Mammary epithelial cell (primary cell): ENCODE measurements at regions of chr1 and their contacts with region 1.

Region 1: GRCh38 chr1:35192853-35193664 is at the start of gene SFPQ:
- DNase-seq: peak; percentile 98
- H3K4me3 ChIP-seq: peak within 1 kb of the TSS; percentile 93 to 100 (median 93)
- H3K27ac ChIP-seq: peak within 1 kb of the TSS; percentile 87
- H3K4me1 ChIP-seq: peaks cover 23% of the 10 kb centered on the region
- H3K27me3 ChIP-seq: no peaks in the 10 kb centered on the region
- CTCF ChIP-seq: no peak
- total RNA-seq, gene SFPQ: 156 to 255 TPM

Region 2: DNA sequence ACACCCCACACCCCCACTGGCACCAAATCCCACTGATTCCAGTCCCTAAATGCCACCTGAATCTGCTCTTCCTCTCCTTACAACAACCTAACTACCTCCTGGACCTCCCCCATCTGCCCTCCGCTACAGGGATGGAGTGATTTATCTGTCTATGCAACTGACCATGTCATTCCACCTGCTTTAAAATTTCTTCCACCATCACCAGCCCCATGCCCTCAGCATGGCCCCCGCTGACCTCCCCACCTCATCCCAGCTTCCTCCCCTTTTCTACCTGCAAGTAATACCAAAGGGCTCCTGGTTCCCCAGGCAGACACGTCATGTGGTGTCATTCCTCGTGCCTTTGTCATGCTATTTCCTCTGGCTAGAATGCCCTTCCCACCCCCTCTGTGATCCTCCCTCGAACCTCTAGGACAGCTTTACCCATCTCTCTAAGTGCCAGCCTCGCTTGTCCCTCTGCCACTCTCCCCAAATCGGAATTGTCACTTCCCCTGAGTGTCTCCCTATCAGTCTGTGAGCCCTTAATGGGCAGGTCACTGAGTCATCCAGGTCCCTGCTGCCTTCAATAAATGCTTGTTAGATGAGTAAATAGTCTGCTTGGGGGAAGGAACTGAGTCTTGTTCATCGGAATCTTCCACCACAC is 429.8 kb before region 1 on chr1:
- CTCF ChIA-PET with region 1: no interaction called
- dilution Hi-C with region 1: no loop called
- in situ Hi-C with region 1: no loop called
- intact Hi-C with region 1: loop called (anchors 10 kb)
- DNase-seq: peak; percentile 91
- H3K4me3 ChIP-seq: peak overlapping the region in 1 of 3 experiments; percentile 2
- H3K27ac ChIP-seq: peak overlapping the region; percentile 81
- H3K4me1 ChIP-seq: peaks cover 53% of the 10 kb centered on the region
- H3K27me3 ChIP-seq: no peaks in the 10 kb centered on the region
- CTCF ChIP-seq: no peak

Region 3: DNA sequence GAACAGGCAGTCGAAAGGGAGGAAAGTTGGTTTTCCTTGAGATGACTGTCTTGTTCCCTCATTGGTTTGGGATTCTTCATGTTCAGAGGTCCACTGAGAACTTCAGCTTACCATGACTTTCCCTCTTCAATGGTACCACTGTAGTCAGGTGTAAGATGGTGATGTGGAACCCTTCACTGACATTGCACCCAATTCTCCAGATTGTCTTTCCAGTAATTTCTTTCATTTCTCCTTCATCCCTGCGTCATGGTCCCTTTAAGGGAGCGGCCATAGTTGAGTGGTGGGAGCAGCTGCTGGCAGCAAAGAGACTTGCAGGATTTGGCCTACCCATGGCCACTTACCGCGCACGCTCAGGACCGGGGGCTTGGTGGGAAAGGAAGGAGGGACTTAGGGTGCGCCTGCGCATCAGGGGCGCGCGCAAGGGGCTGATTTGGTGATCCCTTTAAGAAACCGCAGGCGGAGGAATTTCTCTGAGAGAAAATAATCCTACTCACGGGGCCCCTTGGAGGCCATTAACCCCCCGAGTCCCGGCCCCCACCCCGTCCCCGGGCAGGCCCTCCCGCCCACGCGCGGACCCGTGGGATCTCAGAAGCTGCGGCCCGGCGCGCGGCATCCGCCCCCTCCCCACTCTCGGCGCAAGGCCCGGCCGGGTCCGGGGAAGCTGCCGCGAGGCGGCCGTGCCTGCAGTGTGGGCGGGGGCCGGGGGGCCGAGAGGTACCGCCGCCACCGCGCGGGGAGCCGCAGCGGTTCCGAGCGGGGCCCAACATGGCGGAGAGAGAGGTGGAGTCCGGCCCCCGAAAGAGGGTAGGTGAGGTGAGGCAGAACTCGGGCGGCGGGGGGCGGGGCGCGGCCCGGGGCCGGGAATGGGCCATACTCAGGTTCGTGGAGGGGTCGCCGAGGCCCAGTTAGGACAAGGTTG is 75.5 kb after region 1 on chr1 and contains the start of gene ZMYM4:
- CTCF ChIA-PET with region 1: no interaction called
- dilution Hi-C with region 1: loop called (anchors 10 kb)
- in situ Hi-C with region 1: no loop called
- intact Hi-C with region 1: loop called (anchors 2 kb)
- DNase-seq: peak; percentile 92
- H3K4me3 ChIP-seq: peak within 1 kb of the TSS; percentile 80 to 94 (median 83)
- H3K27ac ChIP-seq: peak within 1 kb of the TSS; percentile 56
- H3K4me1 ChIP-seq: peaks cover 14% of the 10 kb centered on the region
- H3K27me3 ChIP-seq: no peaks in the 10 kb centered on the region
- CTCF ChIP-seq: no peak
- total RNA-seq, gene ZMYM4: 34.3 to 47.9 TPM

Region 4: GRCh38 chr1:35298464-35298863 is 105.4 kb after region 1 on chr1:
- CTCF ChIA-PET with region 1: no interaction called
- dilution Hi-C with region 1: no loop called
- in situ Hi-C with region 1: loop called in 1 of 2 experiments (anchors 10 kb)
- intact Hi-C with region 1: no loop called
- DNase-seq: peak; percentile 57
- H3K4me3 ChIP-seq: no peak overlapping the region
- H3K27ac ChIP-seq: no peak overlapping the region
- H3K4me1 ChIP-seq: no peaks in the 10 kb centered on the region
- H3K27me3 ChIP-seq: no peaks in the 10 kb centered on the region
- CTCF ChIP-seq: peak; percentile 38 to 57

Region 5: DNA sequence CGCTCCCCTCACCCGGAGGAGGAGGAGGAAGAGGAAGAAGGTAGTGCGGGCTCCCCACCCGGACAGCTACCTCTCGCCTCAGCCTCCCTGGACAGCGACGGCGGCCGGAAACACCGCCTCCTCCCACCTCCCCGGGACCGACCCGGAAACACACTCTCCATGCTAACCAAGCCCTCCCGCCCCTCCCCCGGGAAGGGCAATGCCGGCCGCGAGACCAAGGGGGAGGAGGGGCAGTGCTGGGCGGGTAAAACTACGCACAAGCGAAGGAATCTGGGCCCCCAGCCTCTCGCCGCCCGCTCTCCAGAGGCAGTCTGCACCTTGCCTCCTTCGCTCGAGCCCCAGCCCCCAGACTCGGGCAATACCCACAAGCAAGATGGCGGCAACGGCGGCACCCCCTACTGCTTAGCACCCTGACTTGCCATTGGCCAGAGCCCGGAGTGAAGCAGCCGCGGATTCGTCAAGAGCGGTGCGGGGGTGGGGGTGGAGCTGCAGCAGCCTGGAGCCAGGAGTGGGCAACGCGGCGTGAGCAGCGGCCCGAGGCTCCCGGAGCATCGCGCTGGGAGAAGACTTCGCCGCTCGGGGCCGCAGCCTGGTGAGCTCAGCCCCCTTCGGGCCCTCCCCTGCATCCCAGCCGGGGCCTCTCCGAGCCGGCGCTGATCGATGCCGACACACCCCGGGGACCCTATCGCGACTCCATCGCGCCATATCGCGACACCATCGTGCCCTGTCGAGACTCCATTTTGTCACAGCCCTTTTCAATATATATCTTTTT is 364.4 kb after region 1 on chr1 and contains the starts of genes KIAA0319L and NCDN:
- CTCF ChIA-PET with region 1: no interaction called
- dilution Hi-C with region 1: no loop called
- in situ Hi-C with region 1: loop called in 1 of 2 experiments (anchors 10 kb)
- intact Hi-C with region 1: loop called (anchors 5 kb)
- DNase-seq: peak; percentile 97
- H3K4me3 ChIP-seq: peak within 1 kb of the TSS; percentile 85 to 96 (median 90)
- H3K27ac ChIP-seq: peak within 1 kb of the TSS; percentile 69
- H3K4me1 ChIP-seq: peaks cover 55% of the 10 kb centered on the region
- H3K27me3 ChIP-seq: no peaks in the 10 kb centered on the region
- CTCF ChIP-seq: no peak
- total RNA-seq, gene KIAA0319L: 38.1 to 68.2 TPM
- total RNA-seq, gene NCDN: 21.8 to 35.1 TPM

Region 6: DNA sequence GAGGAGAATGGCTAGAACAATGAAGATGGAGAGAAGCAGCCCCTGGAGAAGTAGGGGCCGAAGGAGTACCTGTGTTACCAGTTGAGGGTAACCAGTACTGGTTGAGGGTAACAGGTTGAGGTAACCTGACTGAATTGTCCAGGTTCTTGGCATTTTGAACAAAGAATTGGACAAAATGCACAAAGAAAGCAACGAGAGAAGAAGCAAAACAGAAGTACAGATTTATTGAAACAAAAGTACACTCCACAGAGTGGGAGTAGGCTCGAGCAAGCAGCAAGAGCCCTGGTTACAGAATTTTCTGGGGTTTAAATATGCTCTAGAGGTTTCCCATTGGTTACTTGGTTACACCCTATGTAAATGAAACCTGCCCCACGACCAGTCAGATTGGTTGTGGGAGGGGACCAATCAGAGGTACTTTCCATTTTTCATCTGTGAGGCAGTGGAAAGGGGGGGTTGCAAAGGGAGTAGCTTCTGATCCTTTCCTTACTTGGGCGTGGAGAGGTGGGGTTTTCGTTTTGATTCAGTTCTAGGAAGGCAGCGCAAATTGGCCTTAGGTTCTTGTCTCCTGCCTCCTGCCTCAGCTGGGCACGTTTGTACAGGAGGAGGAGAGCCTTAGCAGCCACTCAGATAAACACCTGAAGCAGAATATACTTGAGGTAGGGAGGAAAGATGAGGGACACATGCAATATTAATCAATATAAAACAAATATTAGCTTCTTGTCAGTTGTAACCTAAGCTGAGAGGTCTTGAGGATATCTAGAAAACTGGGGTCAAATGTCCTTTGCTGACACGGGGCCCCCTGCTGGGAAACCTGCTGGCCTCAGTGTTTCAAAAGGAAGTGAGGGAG is 1218.8 kb after region 1 on chr1:
- CTCF ChIA-PET with region 1: no interaction called
- dilution Hi-C with region 1: no loop called
- in situ Hi-C with region 1: no loop called
- intact Hi-C with region 1: no loop called
- DNase-seq: peak; percentile 51
- H3K4me3 ChIP-seq: no peak overlapping the region
- H3K27ac ChIP-seq: no peak overlapping the region
- H3K4me1 ChIP-seq: peaks cover 8% of the 10 kb centered on the region
- H3K27me3 ChIP-seq: no peaks in the 10 kb centered on the region
- CTCF ChIP-seq: peak in 1 of 2 donors; percentile 2